Breast epithelium (tissue), 4 donors: ENCODE measurements at regions of chr17 and their contacts with region 1.

Region 1: DNA sequence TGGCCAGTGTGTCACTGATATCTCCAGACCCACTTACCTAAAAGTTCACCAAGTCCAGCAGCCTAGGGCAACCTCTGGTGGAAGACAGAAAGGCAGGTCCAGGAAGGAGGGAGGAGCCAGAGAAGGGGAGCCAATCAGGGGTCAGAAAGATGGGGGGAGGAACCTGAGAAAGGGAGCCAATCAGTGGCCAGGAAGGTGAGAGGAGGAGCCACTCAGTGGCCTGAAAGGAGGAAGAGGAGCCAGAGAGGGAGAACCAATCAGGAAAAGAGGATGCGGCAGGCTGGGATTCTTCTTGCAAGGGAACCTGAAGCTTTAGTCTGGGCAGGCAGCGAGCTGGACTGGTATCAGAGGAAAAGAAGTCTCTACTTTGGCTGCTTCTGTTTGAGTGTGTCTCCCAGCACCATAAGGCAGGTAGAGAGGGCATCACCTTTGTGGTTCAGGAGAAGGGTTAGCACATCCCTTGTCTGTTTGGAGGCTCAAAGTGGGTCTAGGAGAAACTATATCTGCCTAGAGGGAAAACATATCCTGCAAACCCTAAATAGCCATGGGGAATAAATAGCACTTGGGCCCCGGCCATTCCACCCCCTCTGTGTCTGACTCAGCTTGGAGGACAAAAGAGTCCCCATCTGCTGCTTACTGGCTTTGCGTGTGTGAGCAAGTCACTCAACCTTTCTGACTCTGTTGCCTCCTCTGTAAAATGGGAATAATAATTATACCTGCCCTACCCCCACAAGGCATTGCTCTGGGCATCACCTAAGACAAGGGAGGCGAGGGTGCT is 43.4 kb upstream of the CRHR1 start:
- DNase-seq: peak in 1 of 2 donors; percentile 38
- H3K4me3 ChIP-seq: no peak overlapping the region
- H3K27ac ChIP-seq: no peak overlapping the region
- H3K4me1 ChIP-seq: no peaks in the 10 kb centered on the region
- H3K27me3 ChIP-seq: no peaks in the 10 kb centered on the region
- CTCF ChIP-seq: no peak
- POLR2A ChIP-seq: no peak

Region 2: DNA sequence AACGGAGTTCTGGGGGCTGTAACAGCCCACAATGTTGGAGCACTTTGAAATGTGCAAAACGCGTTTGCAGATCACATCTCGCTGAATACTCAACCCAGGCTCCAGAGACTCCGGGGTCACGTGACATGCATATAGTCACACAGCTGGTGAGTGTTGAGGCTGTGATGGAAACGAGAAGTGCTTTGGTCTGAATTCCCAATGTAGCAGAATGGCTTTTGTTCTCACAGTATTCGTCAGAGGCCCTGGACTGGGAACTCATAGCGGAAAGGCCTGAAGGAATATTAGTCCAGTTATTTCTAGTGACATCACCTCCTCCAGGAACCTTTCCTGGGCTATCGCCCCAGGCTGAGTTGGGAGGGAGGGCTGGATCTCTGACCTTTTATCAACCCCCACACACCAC is 52.4 kb before region 1 on chr17:
- intact Hi-C with region 1: loop called (anchors 10 kb)
- DNase-seq: no peak
- H3K4me3 ChIP-seq: no peak overlapping the region
- H3K27ac ChIP-seq: no peak overlapping the region
- H3K4me1 ChIP-seq: no peaks in the 10 kb centered on the region
- H3K27me3 ChIP-seq: peaks cover 0 to 6% of the 10 kb centered on the region in 2 donors
- CTCF ChIP-seq: no peak
- POLR2A ChIP-seq: no peak

Region 3: GRCh38 chr17:45756266-45756991 is 15.7 kb after region 1 on chr17:
- intact Hi-C with region 1: no loop called
- DNase-seq: no peak
- H3K4me3 ChIP-seq: no peak overlapping the region
- H3K27ac ChIP-seq: no peak overlapping the region
- H3K4me1 ChIP-seq: no peaks in the 10 kb centered on the region
- H3K27me3 ChIP-seq: peaks cover 0 to 9% of the 10 kb centered on the region in 2 donors
- CTCF ChIP-seq: no peak
- POLR2A ChIP-seq: no peak